ENCODE measurements at regions of chr2 and their contacts with region 1.

Region 1: DNA sequence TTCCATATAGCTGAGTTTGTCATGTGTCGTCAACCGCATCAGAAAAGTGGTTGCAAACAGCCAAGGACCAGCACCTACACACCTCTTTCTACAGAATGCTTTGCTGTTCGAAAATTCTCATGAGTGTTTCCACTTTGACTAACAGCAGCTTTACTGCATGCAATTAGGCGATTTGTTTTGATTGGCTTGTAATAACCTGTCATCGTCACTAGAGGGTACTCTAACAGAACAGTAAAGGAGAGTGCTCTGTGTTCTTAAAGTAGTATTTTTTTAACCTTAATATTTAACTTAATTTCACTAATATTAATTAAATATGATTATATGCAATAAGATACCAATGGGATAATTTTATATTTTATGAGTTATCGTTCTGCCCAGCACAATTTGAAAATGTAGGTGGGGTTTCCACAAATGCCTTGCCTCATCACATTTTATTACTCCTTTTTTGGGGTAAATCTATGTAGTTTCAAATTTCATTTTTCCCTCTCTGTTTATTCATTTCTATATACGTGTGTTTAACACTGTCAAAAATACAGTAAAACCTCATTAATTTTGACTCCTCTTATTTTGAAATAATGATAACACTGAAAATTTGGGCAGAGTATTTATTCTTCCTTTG is 502.2 kb downstream of the NRXN1 start:
- DNase-seq: no peak
- H3K4me3 Mint-ChIP-seq: no peak overlapping the region
- H3K27ac Mint-ChIP-seq: no peak overlapping the region
- H3K4me1 Mint-ChIP-seq: no peaks in the 10 kb centered on the region
- H3K27me3 Mint-ChIP-seq: no peaks in the 10 kb centered on the region
- CTCF ChIP-seq: peak; percentile 47

Region 2: DNA sequence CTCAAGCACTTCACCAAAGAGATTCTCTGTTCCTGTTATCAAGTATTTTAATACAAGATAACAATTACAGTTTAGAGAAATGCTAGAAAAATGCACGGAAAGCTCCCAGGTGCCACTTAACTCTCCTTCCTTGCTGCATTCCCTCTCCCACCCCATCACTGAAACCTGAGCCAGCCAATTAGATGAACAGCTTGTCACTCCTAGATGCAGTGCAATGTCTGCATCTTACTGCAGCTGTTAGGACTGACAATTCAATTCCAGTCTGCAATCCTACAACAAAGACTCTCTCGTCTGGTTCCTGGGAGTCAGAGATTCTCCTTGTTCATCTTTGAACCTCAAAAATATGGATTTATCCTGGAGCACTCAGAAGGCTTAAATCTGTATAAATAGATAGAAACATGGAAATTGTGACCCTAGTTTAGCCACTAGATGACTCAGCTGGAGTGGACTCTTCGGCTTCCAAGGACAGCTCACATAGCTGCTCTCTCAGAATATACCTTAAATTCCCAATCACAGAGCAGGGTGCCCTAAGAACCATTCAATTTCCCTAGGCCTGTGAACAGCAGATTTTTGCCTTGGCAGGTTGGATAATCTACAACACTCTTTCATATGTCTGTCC is 191.1 kb after region 1 on chr2:
- CTCF ChIA-PET with region 1: no interaction called
- intact Hi-C with region 1: loop called (anchors 10 kb)
- DNase-seq: no peak
- H3K4me3 Mint-ChIP-seq: no peak overlapping the region
- H3K27ac Mint-ChIP-seq: no peak overlapping the region
- H3K4me1 Mint-ChIP-seq: no peaks in the 10 kb centered on the region
- H3K27me3 Mint-ChIP-seq: no peaks in the 10 kb centered on the region
- CTCF ChIP-seq: no peak

Region 3: GRCh38 chr2:51697095-51697494 is 1167.4 kb after region 1 on chr2:
- CTCF ChIA-PET with region 1: no interaction called
- intact Hi-C with region 1: loop called (anchors 10 kb)
- DNase-seq: no peak
- H3K4me3 Mint-ChIP-seq: no peak overlapping the region
- H3K27ac Mint-ChIP-seq: peak overlapping the region; percentile 50
- H3K4me1 Mint-ChIP-seq: no peaks in the 10 kb centered on the region
- H3K27me3 Mint-ChIP-seq: no peaks in the 10 kb centered on the region
- CTCF ChIP-seq: no peak

Measured in Calu3 (cell line).